MCF 10A (cell line): ENCODE measurements at regions of chr10 and their contacts with region 1.

Region 1: DNA sequence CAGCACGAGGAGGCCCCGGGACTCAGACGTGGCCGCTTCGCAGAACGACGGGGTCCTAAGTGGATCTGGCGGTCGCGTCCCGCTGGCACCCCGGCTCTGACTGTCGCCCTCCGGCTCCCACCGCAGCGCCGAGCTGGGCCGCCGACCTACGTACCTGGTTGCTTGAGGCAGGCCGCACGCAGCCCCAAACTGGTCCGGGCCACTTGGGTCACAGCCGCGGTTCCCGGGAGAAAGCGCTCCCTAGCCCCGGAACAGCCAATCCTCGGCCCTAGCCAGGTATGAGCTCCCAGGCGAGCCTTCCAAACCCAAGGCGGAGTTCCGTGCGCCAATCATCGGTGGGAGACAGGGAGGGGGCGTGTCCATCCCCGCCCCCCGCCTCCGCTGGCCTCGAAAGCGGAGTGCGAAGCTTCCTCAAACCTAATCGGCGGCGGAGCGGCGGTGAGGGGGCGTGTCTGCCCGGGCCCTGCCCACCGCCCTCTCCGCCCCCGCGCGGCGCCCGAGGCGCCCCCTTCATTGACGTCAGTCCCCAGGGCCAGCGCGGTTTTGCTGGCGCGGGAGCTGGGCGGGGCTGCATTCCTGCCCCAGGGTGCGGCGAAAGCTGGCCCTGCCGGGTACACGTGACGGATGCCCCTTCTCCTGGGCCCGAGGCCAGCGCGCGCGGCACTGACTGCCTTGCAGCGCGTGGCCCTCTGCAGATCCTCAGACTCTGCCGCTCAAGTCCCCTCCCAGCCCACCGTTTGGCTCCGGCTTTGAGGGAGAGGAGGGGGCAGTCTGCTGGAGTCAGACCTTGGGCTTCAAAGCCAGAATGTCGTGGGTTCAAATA is at the start of gene AVPI1:
- DNase-seq: peak; percentile 99
- H3K4me3 Mint-ChIP-seq: peak within 1 kb of the TSS; percentile 91
- H3K27ac Mint-ChIP-seq: peak within 1 kb of the TSS; percentile 93
- H3K4me1 Mint-ChIP-seq: peaks cover 23% of the 10 kb centered on the region
- H3K27me3 Mint-ChIP-seq: no peaks in the 10 kb centered on the region
- CTCF ChIP-seq: no peak
- total RNA-seq, gene AVPI1: 276 and 305 TPM in 2 replicates

Region 2: GRCh38 chr10:97572214-97572989 is 114.8 kb before region 1 on chr10 and contains the start of gene ANKRD2:
- CTCF ChIA-PET with region 1: interaction called, 11 read pairs
- POLR2A ChIA-PET with region 1: interaction called, 14 read pairs
- intact Hi-C with region 1: no loop called
- DNase-seq: peak; percentile 89
- H3K4me3 Mint-ChIP-seq: peak within 1 kb of the TSS; percentile 50
- H3K27ac Mint-ChIP-seq: peak within 1 kb of the TSS; percentile 57
- H3K4me1 Mint-ChIP-seq: peaks cover 40% of the 10 kb centered on the region
- H3K27me3 Mint-ChIP-seq: no peaks in the 10 kb centered on the region
- CTCF ChIP-seq: peak; percentile 91
- total RNA-seq, gene ANKRD2: 1.8 and 5.8 TPM in 2 replicates

Region 3: GRCh38 chr10:97648562-97649404 is 38.4 kb before region 1 on chr10:
- CTCF ChIA-PET with region 1: interaction called, 4 read pairs
- POLR2A ChIA-PET with region 1: interaction called, 37 read pairs
- intact Hi-C with region 1: loop called (anchors 5 kb)
- DNase-seq: peak; percentile 78
- H3K4me3 Mint-ChIP-seq: peak overlapping the region; percentile 11
- H3K27ac Mint-ChIP-seq: peak overlapping the region; percentile 78
- H3K4me1 Mint-ChIP-seq: peaks cover 26% of the 10 kb centered on the region
- H3K27me3 Mint-ChIP-seq: no peaks in the 10 kb centered on the region
- CTCF ChIP-seq: no peak

Region 4: DNA sequence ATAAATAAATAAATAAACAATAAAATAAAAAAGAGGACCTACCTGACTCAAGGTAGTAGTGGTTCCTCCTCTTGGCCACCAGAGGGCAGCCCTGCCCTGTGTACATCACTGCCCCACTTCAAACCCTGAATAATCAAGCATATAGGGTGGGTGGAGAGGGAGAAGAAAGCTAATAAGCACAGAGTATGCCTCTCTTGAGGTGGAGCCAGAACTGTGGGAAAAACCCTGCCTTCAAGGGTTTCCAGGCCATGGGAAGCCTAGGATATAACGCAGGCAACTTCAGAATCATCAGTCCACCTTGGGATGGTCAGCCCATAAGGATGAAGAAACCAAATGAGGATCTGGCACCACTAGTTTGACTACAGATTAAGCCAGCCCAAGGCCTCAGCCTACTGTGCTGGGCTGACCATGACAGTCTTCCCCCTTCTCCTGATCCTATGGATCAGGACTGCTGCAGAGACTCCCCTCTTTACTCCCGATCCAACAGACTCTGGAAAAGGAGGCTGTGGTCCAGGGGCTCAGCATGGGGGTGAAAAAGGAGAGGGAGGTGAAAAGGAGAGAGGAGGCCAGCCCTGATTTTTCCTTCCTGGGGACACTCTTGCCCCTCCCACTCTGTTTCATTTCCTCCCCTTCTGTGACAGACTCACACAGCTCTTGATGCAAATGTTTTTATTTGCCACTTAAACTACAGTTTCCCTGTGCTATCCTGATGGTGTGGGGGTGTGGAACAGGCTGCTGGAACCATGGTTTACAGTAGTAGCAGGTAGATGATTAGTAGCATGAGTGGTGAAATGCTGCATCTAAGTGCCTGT is 10.2 kb before region 1 on chr10:
- CTCF ChIA-PET with region 1: interaction called, 11 read pairs
- POLR2A ChIA-PET with region 1: interaction called, 94 read pairs
- intact Hi-C with region 1: loop called (anchors 1 kb)
- DNase-seq: peak; percentile 67
- H3K4me3 Mint-ChIP-seq: no peak overlapping the region
- H3K27ac Mint-ChIP-seq: peak overlapping the region; percentile 31
- H3K4me1 Mint-ChIP-seq: peaks cover 18% of the 10 kb centered on the region
- H3K27me3 Mint-ChIP-seq: no peaks in the 10 kb centered on the region
- CTCF ChIP-seq: peak; percentile 82

Region 5: DNA sequence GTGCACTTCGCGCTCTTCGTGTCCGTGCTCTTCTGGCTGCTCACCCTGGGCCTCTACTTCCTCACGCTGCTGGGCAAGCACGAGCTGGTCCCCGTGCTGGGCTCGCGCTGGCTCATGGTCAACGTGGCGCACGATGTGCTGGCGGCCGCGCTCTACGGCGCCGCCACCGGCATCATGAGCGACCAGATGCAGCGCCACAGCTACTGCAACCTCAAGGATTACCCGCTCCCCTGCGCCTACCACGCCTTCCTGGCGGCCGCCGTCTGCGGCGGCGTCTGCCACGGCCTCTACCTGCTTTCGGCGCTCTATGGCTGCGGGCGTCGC is 26.8 kb after region 1 on chr10:
- CTCF ChIA-PET with region 1: interaction called, 20 read pairs
- POLR2A ChIA-PET with region 1: interaction called, 915 read pairs
- intact Hi-C with region 1: no loop called
- DNase-seq: peak; percentile 59
- H3K4me3 Mint-ChIP-seq: peak overlapping the region; percentile 97
- H3K27ac Mint-ChIP-seq: peak overlapping the region; percentile 92
- H3K4me1 Mint-ChIP-seq: peaks cover 60% of the 10 kb centered on the region
- H3K27me3 Mint-ChIP-seq: no peaks in the 10 kb centered on the region
- CTCF ChIP-seq: no peak

Region 6: GRCh38 chr10:97731346-97732051 is 44.3 kb after region 1 on chr10:
- CTCF ChIA-PET with region 1: interaction called, 45 read pairs
- POLR2A ChIA-PET with region 1: interaction called, 270 read pairs
- intact Hi-C with region 1: no loop called
- DNase-seq: peak; percentile 92
- H3K4me3 Mint-ChIP-seq: no peak overlapping the region
- H3K27ac Mint-ChIP-seq: no peak overlapping the region
- H3K4me1 Mint-ChIP-seq: peaks cover 15% of the 10 kb centered on the region
- H3K27me3 Mint-ChIP-seq: no peaks in the 10 kb centered on the region
- CTCF ChIP-seq: peak; percentile 86

Region 7: DNA sequence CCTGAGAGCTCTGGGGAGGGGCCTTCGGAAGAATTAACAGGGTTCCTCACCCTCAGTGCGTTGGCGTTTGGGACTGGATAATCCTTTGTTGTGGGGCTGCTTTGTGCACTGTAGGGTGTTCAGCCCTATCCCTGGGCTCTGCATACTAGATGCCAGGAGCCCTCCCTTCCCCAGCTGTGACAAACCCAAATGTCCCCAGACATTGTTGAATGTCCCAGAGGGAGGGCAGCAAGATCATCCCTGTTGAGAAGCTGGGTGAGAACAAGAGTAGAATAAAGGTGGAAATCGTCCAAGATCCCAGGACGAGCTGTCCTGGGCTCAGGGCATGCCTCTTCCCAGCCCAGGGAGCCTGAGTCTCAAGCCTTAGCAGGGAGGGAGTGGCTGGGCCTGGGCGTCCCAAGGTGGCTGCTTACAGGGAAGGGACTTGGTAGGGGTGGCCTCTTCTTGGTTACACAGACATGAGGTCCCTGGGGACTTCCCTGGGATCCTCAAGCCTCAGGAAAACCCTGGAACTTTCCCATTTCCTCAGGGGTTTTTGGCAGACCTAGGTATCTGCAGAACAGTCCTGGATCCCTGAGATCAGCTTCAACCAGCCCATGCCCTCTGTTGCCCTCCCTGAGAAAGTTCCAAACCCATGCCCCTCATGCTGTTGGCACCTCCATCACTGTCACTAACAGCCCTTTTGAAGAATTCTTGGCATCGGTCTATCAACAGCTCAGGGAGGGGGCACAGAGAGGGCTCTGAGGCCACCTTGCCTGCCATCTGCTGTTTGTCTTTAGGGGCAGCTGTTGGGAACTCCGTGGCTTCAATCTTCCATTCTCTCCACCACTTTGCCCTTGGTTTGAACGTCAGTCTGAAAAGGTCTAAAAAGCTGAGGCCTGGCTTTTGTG is 216.2 kb after region 1 on chr10:
- CTCF ChIA-PET with region 1: no interaction called
- POLR2A ChIA-PET with region 1: no interaction called
- intact Hi-C with region 1: no loop called
- DNase-seq: no peak
- H3K4me3 Mint-ChIP-seq: no peak overlapping the region
- H3K27ac Mint-ChIP-seq: no peak overlapping the region
- H3K4me1 Mint-ChIP-seq: no peaks in the 10 kb centered on the region
- H3K27me3 Mint-ChIP-seq: peaks cover 25% of the 10 kb centered on the region
- CTCF ChIP-seq: no peak